MCF 10A (cell line): ENCODE measurements at regions of chr1 and their contacts with region 1.

Region 1: GRCh38 chr1:215146341-215146826 is 63.8 kb downstream of the KCNK2 start:
- DNase-seq: peak; percentile 77
- H3K4me3 Mint-ChIP-seq: no peak overlapping the region
- H3K27ac Mint-ChIP-seq: no peak overlapping the region
- H3K4me1 Mint-ChIP-seq: no peaks in the 10 kb centered on the region
- H3K27me3 Mint-ChIP-seq: no peaks in the 10 kb centered on the region
- CTCF ChIP-seq: peak; percentile 98

Region 2: GRCh38 chr1:214648801-214649200 is 497.6 kb before region 1 on chr1:
- CTCF ChIA-PET with region 1: interaction called, 49 read pairs
- POLR2A ChIA-PET with region 1: no interaction called
- intact Hi-C with region 1: no loop called
- DNase-seq: no peak
- H3K4me3 Mint-ChIP-seq: no peak overlapping the region
- H3K27ac Mint-ChIP-seq: no peak overlapping the region
- H3K4me1 Mint-ChIP-seq: no peaks in the 10 kb centered on the region
- H3K27me3 Mint-ChIP-seq: no peaks in the 10 kb centered on the region
- CTCF ChIP-seq: no peak

Region 3: GRCh38 chr1:214808845-214809460 is 337.4 kb before region 1 on chr1:
- CTCF ChIA-PET with region 1: interaction called, 160 read pairs
- POLR2A ChIA-PET with region 1: interaction called, 28 read pairs
- intact Hi-C with region 1: loop called (anchors 1 kb)
- DNase-seq: peak; percentile 84
- H3K4me3 Mint-ChIP-seq: no peak overlapping the region
- H3K27ac Mint-ChIP-seq: no peak overlapping the region
- H3K4me1 Mint-ChIP-seq: no peaks in the 10 kb centered on the region
- H3K27me3 Mint-ChIP-seq: no peaks in the 10 kb centered on the region
- CTCF ChIP-seq: peak; percentile 93

Region 4: GRCh38 chr1:214957330-214958137 is 188.8 kb before region 1 on chr1:
- CTCF ChIA-PET with region 1: interaction called, 11 read pairs
- POLR2A ChIA-PET with region 1: no interaction called
- intact Hi-C with region 1: no loop called
- DNase-seq: peak; percentile 98
- H3K4me3 Mint-ChIP-seq: peak overlapping the region; percentile 38
- H3K27ac Mint-ChIP-seq: peak overlapping the region; percentile 93
- H3K4me1 Mint-ChIP-seq: peaks cover 23% of the 10 kb centered on the region
- H3K27me3 Mint-ChIP-seq: no peaks in the 10 kb centered on the region
- CTCF ChIP-seq: no peak

Region 5: DNA sequence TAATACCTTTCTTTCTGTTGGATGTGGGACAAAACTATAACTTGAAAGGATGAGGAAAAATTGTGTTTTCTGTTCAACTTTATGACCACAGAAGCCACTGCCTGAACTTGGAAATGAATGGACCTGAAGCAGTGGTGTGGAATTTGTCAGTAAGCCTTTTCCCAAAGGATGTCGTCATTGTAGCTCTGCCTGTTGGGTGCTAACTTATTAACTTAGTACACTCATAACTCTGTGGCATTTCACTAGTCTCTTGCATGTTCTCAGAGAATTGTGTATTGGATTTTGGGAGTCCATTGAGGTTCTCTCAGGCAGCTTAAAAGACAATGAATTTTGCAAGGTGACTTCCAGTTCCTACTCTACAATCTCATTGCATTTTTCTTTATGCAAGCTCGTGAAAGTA is 14.2 kb before region 1 on chr1:
- CTCF ChIA-PET with region 1: interaction called, 68 read pairs
- POLR2A ChIA-PET with region 1: interaction called, 11 read pairs
- intact Hi-C with region 1: no loop called
- DNase-seq: peak; percentile 44
- H3K4me3 Mint-ChIP-seq: no peak overlapping the region
- H3K27ac Mint-ChIP-seq: no peak overlapping the region
- H3K4me1 Mint-ChIP-seq: peaks cover 21% of the 10 kb centered on the region
- H3K27me3 Mint-ChIP-seq: no peaks in the 10 kb centered on the region
- CTCF ChIP-seq: no peak

Region 6: GRCh38 chr1:215201283-215201682 is 54.9 kb after region 1 on chr1:
- CTCF ChIA-PET with region 1: no interaction called
- POLR2A ChIA-PET with region 1: no interaction called
- intact Hi-C with region 1: no loop called
- DNase-seq: no peak
- H3K4me3 Mint-ChIP-seq: no peak overlapping the region
- H3K27ac Mint-ChIP-seq: no peak overlapping the region
- H3K4me1 Mint-ChIP-seq: no peaks in the 10 kb centered on the region
- H3K27me3 Mint-ChIP-seq: no peaks in the 10 kb centered on the region
- CTCF ChIP-seq: no peak

Region 7: DNA sequence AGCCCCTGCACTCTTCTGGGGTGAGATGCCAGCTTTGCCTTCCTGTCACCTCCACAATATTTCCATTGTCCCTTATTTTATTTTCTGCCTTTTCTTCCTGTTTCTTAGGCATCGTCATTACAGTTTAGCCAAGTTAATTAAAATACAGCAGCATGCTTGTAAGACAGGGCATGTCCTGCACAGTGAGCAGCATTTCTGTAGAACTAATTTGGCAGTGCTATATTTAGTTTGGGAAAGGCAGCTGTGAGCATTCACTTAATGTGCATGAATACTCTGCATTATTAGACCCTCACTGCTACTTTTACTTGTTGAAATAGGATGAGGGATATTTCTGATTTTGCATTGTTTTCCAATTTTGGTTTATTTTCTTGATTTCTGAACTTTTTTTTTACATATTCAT is 69.5 kb after region 1 on chr1:
- CTCF ChIA-PET with region 1: no interaction called
- POLR2A ChIA-PET with region 1: no interaction called
- intact Hi-C with region 1: no loop called
- DNase-seq: no peak
- H3K4me3 Mint-ChIP-seq: no peak overlapping the region
- H3K27ac Mint-ChIP-seq: no peak overlapping the region
- H3K4me1 Mint-ChIP-seq: no peaks in the 10 kb centered on the region
- H3K27me3 Mint-ChIP-seq: no peaks in the 10 kb centered on the region
- CTCF ChIP-seq: no peak

Region 8: DNA sequence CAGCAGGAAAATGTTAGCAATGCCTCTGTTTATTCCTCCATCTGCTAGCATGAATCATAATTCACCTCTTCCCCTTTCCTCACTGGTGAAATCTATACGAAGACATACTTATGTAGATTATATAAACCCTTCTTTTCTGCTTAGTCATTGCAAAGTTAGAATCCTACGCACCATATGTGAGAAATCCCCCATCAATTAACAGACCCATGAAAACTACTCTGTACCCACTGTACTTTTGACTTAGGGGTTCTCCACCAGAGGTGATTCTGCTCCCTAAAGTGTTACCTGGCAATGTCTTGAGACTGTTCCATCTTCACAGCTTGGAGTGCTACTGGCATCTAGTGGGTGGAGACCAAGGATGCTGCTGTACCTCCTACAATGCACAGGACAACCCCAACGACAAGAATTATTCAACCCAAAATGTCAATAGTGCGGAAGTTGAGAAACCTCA is 371.1 kb after region 1 on chr1:
- CTCF ChIA-PET with region 1: interaction called, 16 read pairs
- POLR2A ChIA-PET with region 1: interaction called, 3 read pairs
- intact Hi-C with region 1: loop called (anchors 1 kb)
- DNase-seq: peak; percentile 79
- H3K4me3 Mint-ChIP-seq: no peak overlapping the region
- H3K27ac Mint-ChIP-seq: peak overlapping the region; percentile 65
- H3K4me1 Mint-ChIP-seq: peaks cover 12% of the 10 kb centered on the region
- H3K27me3 Mint-ChIP-seq: no peaks in the 10 kb centered on the region
- CTCF ChIP-seq: peak; percentile 87